Transverse colon (tissue), 4 donors: ENCODE measurements at regions of chr17 and their contacts with region 1.

Region 1: GRCh38 chr17:62975206-62975605 is 9.2 kb downstream of the TANC2 start:
- DNase-seq: no peak
- H3K4me3 ChIP-seq: no peak overlapping the region
- H3K27ac ChIP-seq: no peak overlapping the region
- H3K4me1 ChIP-seq: peaks cover 0 to 10% (median under 1%) of the 10 kb centered on the region in 4 donors
- H3K27me3 ChIP-seq: no peaks in the 10 kb centered on the region
- CTCF ChIP-seq: no peak
- EP300 ChIP-seq: no peak
- POLR2A ChIP-seq: no peak

Region 2: DNA sequence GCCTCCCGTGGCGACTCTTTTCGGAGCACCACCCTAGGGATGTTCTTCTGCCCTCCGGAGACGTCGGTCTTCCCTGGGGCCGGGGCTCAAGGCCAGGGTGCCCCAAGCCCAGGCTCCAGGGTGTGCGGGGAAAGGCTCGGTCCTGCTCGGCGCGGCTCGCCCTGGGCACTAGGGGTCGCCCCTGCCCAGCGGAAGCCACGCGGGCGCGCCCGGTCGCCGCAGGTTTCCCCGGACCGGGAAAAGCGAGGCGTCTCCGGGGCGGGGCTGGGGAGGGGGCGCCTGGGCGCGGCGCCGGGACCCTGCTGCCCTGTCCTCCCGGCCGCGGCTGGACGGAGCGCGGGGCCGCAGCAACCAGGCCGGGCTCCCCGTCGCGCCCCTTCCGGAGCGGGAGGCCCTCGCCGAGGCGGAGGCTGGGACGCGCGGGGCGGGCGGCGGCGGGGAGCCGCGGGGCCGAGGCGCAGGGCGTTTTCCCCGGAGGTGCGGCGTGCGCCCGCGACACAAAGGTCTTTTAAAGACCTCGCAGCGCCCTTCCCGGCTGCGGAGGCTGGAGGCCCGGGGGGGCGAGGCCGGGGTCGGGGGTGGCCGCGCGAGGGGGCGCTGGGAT is 271.3 kb before region 1 on chr17:
- in situ Hi-C with region 1: loop called in 2 of 4 experiments (anchors 10 kb)
- intact Hi-C with region 1: no loop called
- DNase-seq: peak; percentile 76
- H3K4me3 ChIP-seq: peak overlapping the region; percentile 51 to 73 (median 68)
- H3K27ac ChIP-seq: peak overlapping the region; percentile 66 to 77 (median 72)
- H3K4me1 ChIP-seq: peaks cover 0 to 17% (median 13%) of the 10 kb centered on the region in 4 donors
- H3K27me3 ChIP-seq: peaks cover 12% of the 10 kb centered on the region
- CTCF ChIP-seq: peak; percentile 58 to 91 (median 80)
- EP300 ChIP-seq: no peak
- POLR2A ChIP-seq: no peak

Region 3: GRCh38 chr17:62778689-62779681 is 196.2 kb before region 1 on chr17:
- in situ Hi-C with region 1: no loop called
- intact Hi-C with region 1: no loop called
- DNase-seq: peak; percentile 25
- H3K4me3 ChIP-seq: no peak overlapping the region
- H3K27ac ChIP-seq: no peak overlapping the region
- H3K4me1 ChIP-seq: no peaks in the 10 kb centered on the region
- H3K27me3 ChIP-seq: no peaks in the 10 kb centered on the region
- CTCF ChIP-seq: no peak
- EP300 ChIP-seq: no peak
- POLR2A ChIP-seq: no peak

Region 4: DNA sequence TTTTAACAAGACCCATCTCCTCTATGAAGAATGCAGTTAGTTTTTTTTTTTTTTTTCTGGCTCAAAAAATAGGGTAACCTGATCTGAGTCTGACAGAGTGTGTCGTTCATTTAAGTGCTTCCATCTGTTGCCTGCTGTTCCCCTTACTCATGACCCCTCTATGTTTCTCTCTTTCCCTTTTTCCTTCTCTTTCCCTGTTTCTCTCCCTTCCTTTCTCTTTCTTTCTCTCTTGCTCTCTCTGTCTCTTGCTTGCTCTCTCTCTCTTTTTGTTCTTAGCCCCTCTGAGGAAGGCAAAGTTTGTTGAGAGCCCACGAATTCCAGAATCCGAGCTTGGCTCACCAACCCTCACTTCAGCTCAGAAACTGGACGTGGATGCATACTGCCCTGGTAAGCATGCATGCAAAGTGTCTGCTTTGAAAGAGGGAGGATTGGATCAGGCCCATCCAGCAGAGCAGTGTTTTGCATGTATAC is 175.8 kb after region 1 on chr17:
- in situ Hi-C with region 1: no loop called
- intact Hi-C with region 1: no loop called
- DNase-seq: no peak
- H3K4me3 ChIP-seq: no peak overlapping the region
- H3K27ac ChIP-seq: no peak overlapping the region
- H3K4me1 ChIP-seq: peaks cover 0 to 3% (median 0%) of the 10 kb centered on the region in 4 donors
- H3K27me3 ChIP-seq: no peaks in the 10 kb centered on the region
- CTCF ChIP-seq: no peak
- EP300 ChIP-seq: no peak
- POLR2A ChIP-seq: no peak

Region 5: GRCh38 chr17:63419949-63420867 is 445.0 kb after region 1 on chr17:
- in situ Hi-C with region 1: loop called in 1 of 4 experiments (anchors 25 kb)
- intact Hi-C with region 1: loop called (anchors 10 kb)
- DNase-seq: no peak
- H3K4me3 ChIP-seq: no peak overlapping the region
- H3K27ac ChIP-seq: no peak overlapping the region
- H3K4me1 ChIP-seq: no peaks in the 10 kb centered on the region
- H3K27me3 ChIP-seq: no peaks in the 10 kb centered on the region
- CTCF ChIP-seq: no peak
- EP300 ChIP-seq: no peak
- POLR2A ChIP-seq: no peak